CD14-positive monocyte (primary cell): ENCODE measurements at regions of chr10 and their contacts with region 1.

Region 1: DNA sequence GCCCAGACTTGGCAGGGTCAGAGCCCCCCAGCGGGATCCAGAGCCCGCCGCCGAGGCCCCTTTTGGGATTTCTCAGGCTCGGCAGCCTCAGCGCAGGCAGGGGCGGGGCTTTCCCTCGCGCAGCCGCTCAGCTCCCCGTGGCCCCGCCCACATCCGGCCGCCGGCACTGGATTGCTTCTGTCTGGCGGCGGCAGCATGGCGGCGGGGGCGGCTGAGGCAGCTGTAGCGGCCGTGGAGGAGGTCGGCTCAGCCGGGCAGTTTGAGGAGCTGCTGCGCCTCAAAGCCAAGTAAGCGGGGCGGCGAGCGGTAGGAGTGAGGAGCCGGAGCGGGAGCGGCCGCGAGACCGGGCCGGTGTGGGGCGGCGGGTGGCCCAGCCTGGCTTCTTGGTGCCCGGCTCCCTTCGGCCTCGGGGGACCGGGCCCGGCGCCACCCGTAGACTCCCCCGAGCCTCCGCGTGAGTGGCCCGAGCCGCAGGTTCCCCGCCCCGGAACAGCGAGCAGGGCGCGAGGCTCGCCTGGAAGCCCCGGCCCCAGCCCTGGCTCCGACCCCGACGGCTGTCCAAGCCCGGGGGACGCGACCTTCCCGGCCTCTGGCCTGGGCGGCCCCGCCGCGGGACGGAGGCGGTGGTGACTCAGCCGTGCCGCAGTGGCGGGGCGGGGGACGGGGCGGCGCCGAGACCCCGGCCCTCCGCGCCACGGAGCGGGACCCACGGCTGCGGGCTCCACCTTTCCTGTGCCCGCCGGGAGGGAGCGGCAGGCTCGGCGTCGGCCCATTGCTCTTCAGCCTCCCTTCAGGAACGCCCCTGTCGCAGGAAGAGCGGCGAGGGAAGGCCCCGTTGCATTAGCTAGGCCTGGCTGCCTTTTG is at the start of gene GLRX3:
- DNase-seq: peak; percentile 71 to 82 (median 80)
- H3K4me3 ChIP-seq: peak within 1 kb of the TSS; percentile 53 to 86 (median 62)
- H3K4me3 Mint-ChIP-seq: peak within 1 kb of the TSS; percentile 92
- H3K27ac ChIP-seq: peak within 1 kb of the TSS; percentile 17 to 76
- H3K27ac Mint-ChIP-seq: peak within 1 kb of the TSS; percentile 48 to 93 (median 78)
- H3K4me1 ChIP-seq: peaks cover 19 to 41% of the 10 kb centered on the region in 2 donors
- H3K4me1 Mint-ChIP-seq: peaks cover 43% of the 10 kb centered on the region
- H3K27me3 ChIP-seq: no peaks in the 10 kb centered on the region
- H3K27me3 Mint-ChIP-seq: peaks cover 8 to 20% (median 11%) of the 10 kb centered on the region in 3 donors
- CTCF ChIP-seq: no peak
- polyA plus RNA-seq, gene GLRX3: 25.3 to 94.1 (median 78.2) TPM

Region 2: DNA sequence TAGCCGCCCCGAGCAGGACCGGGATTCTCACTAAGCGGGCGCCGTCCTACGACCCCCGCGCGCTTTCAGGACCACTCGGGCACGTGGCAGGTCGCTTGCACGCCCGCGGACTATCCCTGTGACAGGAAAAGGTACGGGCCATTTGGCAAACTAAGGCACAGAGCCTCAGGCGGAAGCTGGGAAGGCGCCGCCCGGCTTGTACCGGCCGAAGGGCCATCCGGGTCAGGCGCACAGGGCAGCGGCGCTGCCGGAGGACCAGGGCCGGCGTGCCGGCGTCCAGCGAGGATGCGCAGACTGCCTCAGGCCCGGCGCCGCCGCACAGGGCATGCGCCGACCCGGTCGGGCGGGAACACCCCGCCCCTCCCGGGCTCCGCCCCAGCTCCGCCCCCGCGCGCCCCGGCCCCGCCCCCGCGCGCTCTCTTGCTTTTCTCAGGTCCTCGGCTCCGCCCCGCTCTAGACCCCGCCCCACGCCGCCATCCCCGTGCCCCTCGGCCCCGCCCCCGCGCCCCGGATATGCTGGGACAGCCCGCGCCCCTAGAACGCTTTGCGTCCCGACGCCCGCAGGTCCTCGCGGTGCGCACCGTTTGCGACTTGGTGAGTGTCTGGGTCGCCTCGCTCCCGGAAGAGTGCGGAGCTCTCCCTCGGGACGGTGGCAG is 669.6 kb before region 1 on chr10 and contains the start of gene MGMT:
- intact Hi-C with region 1: loop called in 1 of 2 experiments (anchors 10 kb)
- DNase-seq: peak; percentile 82 to 87 (median 86)
- H3K4me3 ChIP-seq: peak within 1 kb of the TSS; percentile 77 to 85 (median 80)
- H3K4me3 Mint-ChIP-seq: peak within 1 kb of the TSS; percentile 73 to 75
- H3K27ac ChIP-seq: peak within 1 kb of the TSS in 1 of 2 donors; percentile 70
- H3K27ac Mint-ChIP-seq: peak within 1 kb of the TSS in 3 of 7 donors; percentile 37 to 85 (median 63)
- H3K4me1 ChIP-seq: peaks cover 12 to 18% of the 10 kb centered on the region in 2 donors
- H3K4me1 Mint-ChIP-seq: peaks cover 6% of the 10 kb centered on the region
- H3K27me3 ChIP-seq: no peaks in the 10 kb centered on the region
- H3K27me3 Mint-ChIP-seq: peaks cover 0 to 6% (median 3%) of the 10 kb centered on the region in 3 donors
- CTCF ChIP-seq: no peak
- polyA plus RNA-seq, gene MGMT: 9.5 to 23.5 (median 17.5) TPM